Colonic mucosa (tissue), 4 donors: ENCODE measurements at regions of chr3 and their contacts with region 1.

Region 1: DNA sequence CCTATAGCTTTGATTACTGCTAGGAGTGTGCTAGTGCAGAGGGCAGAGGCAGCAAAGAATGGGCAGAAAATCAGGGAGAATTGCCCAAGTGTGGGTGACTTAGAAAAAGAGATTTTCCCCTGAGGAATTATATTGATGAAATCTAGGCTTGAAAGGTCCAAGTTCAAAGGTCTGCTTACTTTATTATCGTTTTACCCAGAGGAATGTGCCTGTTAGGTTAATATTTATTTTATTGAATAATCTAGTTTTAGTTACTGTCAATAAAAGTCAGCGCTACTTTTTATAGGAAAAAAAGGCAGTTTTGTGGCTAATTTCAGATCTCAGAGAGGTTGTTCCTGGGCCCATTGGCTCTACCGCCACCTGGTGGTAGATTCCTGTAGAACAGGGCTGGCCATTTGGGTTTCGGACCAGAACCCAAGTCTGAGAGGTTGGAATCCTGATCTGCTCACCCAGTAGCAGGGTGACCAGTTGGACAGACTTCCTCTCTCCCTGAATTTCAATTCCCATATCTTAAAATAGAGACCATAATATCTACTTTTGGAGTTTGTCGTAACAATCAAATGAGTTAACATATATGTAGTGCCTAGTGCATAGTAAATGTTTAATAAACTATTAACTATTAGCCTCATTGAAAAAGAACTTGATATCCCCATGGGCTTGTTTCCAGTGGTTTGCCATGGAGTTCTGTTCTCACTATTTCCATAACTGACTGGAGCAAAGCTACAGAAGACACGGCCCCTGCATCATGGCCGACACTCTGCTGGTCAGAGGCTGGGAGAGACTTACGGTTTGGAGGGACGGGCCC is 62.7 kb upstream of the ZNF148 start:
- DNase-seq: peak; percentile 58
- H3K4me3 ChIP-seq: no peak overlapping the region
- H3K27ac ChIP-seq: no peak overlapping the region
- H3K4me1 ChIP-seq: no peaks in the 10 kb centered on the region
- H3K27me3 ChIP-seq: no peaks in the 10 kb centered on the region
- CTCF ChIP-seq: peak; percentile 98

Region 2: DNA sequence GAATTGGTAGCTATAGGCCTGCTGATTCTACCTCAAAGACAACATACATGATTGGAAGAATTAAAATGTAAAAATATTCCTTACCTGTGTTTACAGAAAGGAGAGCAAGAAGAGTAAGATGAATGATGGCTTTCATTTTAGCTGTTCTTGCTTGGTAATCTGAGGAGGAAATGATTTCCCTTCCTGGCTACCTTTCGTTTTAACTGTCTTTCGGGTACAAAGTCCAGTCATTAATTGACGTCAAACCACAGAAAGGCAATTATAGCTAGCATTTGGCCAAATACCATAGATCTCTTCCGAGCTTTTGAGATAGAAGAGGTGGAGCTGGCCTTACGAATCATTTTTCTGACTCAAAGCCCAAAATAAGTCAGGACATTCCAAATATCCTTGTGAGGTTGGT is 503.3 kb before region 1 on chr3 and contains the start of gene MUC13:
- intact Hi-C with region 1: loop called (anchors 5 kb)
- DNase-seq: peak; percentile 64
- H3K4me3 ChIP-seq: peak within 1 kb of the TSS; percentile 49
- H3K27ac ChIP-seq: peak within 1 kb of the TSS; percentile 82
- H3K4me1 ChIP-seq: no peaks in the 10 kb centered on the region
- H3K27me3 ChIP-seq: no peaks in the 10 kb centered on the region
- CTCF ChIP-seq: no peak
- total RNA-seq, gene MUC13: 360 to 853 TPM

Region 3: DNA sequence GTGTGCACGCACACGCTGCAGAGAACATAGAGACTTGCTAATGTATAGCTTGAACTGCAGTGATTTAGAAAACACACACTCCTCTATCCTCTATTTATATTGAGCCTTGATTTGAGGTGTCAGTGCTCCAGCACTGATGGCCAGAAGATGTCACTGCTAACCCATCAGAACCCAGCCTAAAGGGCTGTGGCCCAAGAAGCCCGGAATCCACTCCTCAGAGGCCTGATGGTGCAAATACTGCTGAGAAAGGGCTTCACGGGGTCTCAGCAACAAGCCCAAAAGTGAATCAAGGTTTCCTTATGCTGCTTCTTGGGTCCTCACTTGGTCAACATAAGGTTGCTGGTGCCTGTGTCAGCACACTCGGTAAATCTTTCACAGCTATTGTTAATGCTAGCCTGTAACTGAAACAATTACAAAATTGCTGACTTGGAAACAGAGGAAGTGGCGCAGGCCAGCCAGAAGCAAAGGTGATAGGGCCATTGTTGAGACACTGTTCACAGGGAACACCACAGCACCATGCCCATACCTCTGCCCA is 442.3 kb before region 1 on chr3:
- intact Hi-C with region 1: loop called (anchors 5 kb)
- DNase-seq: peak; percentile 54
- H3K4me3 ChIP-seq: no peak overlapping the region
- H3K27ac ChIP-seq: no peak overlapping the region
- H3K4me1 ChIP-seq: peaks cover 3% of the 10 kb centered on the region
- H3K27me3 ChIP-seq: no peaks in the 10 kb centered on the region
- CTCF ChIP-seq: peak; percentile 58

Region 4: DNA sequence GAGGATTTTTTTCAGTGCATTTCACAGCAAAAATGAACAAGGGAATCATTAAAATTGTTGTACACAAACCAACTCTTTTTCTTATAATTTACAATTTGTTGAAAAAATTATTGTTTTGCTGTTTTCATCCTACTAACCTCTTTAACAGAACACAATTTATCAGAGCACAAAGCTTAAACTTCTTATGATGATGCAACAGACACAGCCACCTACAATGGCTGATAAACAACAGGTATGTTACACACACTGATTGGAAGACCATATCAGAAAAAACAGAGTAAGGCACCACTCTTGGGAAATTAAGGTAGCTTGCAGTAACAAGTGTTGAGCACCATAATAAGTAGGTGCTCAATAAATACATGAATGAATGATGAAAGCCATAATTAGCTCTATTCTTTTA is 91.1 kb after region 1 on chr3:
- intact Hi-C with region 1: no loop called
- DNase-seq: no peak
- H3K4me3 ChIP-seq: no peak overlapping the region
- H3K27ac ChIP-seq: no peak overlapping the region
- H3K4me1 ChIP-seq: no peaks in the 10 kb centered on the region
- H3K27me3 ChIP-seq: no peaks in the 10 kb centered on the region
- CTCF ChIP-seq: no peak